H1 (cell line): ENCODE measurements at regions of chr1 and their contacts with region 1.

Region 1: DNA sequence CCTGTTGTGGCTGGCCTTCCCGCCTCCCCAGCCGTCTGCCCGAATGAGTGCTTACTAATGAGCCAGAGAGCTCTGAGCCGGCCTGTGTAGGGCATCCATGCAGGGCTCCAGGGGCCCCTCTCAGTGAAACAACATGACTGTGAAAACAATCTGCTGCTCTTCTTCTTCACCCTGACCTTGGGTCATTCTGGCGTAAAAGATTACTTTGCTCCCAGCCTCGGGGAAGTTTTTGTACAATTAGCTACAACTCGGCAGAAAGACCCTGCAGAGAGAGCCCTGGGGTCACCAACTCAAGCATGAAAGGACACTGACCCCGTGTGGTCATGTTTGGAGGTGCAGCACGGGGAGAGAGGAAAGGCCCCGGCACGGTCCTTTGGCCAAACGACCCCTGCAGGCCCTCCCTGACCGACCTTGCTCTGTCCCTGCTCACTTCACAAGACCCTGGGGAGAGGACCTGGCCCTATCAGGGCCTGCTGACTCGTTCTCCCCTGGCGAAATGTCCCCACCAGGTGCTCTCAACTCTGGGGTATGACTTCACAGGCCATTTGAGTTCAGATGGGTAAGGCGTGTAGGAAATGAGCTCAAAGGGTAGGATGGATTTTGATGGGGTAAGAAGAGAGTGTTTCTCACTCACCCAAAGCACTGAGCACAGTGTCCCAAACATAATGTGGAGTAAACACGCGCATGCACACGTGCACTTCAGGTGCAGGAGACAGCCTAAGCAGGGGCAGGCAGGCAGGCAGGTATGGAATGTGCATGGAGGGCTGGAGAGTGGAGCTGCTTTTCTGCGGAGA is 22.9 kb upstream of the FAM20B start:
- DNase-seq: peak; percentile 82 to 99
- H3K4me3 ChIP-seq: peak overlapping the region in 1 of 4 experiments; percentile 39; a peak in 1 of 8 replicates
- H3K27ac ChIP-seq: no peak overlapping the region
- H3K4me1 ChIP-seq: no peaks in the 10 kb centered on the region
- H3K27me3 ChIP-seq: no peaks in the 10 kb centered on the region
- CTCF ChIP-seq: peak; percentile 83 to 98 (median 97)
- EP300 ChIP-seq: no peak
- POLR2A ChIP-seq: no peak
- RAD21 ChIP-seq: peak; percentile 97 to 98

Region 2: GRCh38 chr1:178575611-178576331 is 427.0 kb before region 1 on chr1:
- CTCF ChIA-PET with region 1: interaction called, 16 read pairs
- POLR2A ChIA-PET with region 1: no interaction called
- DNase-seq: no peak
- H3K4me3 ChIP-seq: peak overlapping the region in 2 of 4 experiments; percentile 0 to 9; a peak in 1 of 8 replicates
- H3K27ac ChIP-seq: peak overlapping the region; percentile 69; the same call in 1 of the 2 replicates
- H3K4me1 ChIP-seq: peaks cover 2 to 12% (median 8%) of the 10 kb centered on the region in 4 experiments
- H3K27me3 ChIP-seq: no peaks in the 10 kb centered on the region
- CTCF ChIP-seq: no peak
- EP300 ChIP-seq: no peak
- POLR2A ChIP-seq: no peak
- RAD21 ChIP-seq: no peak

Region 3: GRCh38 chr1:178768423-178768822 is 234.3 kb before region 1 on chr1:
- CTCF ChIA-PET with region 1: interaction called, 34 read pairs
- POLR2A ChIA-PET with region 1: no interaction called
- DNase-seq: peak in 1 of 2 experiments; percentile 50
- H3K4me3 ChIP-seq: no peak overlapping the region
- H3K27ac ChIP-seq: no peak overlapping the region
- H3K4me1 ChIP-seq: peaks cover 0 to 4% (median 0%) of the 10 kb centered on the region in 4 experiments; a peak in 1 of 7 replicates
- H3K27me3 ChIP-seq: no peaks in the 10 kb centered on the region
- CTCF ChIP-seq: peak; percentile 38 to 89 (median 83)
- EP300 ChIP-seq: no peak
- POLR2A ChIP-seq: no peak
- RAD21 ChIP-seq: peak; percentile 70 to 83

Region 4: GRCh38 chr1:178916448-178917174 is 86.1 kb before region 1 on chr1:
- CTCF ChIA-PET with region 1: interaction called, 11 read pairs
- POLR2A ChIA-PET with region 1: no interaction called
- DNase-seq: no peak
- H3K4me3 ChIP-seq: no peak overlapping the region
- H3K27ac ChIP-seq: no peak overlapping the region
- H3K4me1 ChIP-seq: 0 out of 7 replicates have a peak, but pooled peaks cover 0 to 2% (median 0%) of the 10 kb centered on the region in 4 experiments
- H3K27me3 ChIP-seq: no peaks in the 10 kb centered on the region
- CTCF ChIP-seq: no peak
- EP300 ChIP-seq: no peak
- POLR2A ChIP-seq: no peak
- RAD21 ChIP-seq: no peak

Region 5: GRCh38 chr1:178945763-178946266 is 56.9 kb before region 1 on chr1:
- CTCF ChIA-PET with region 1: interaction called, 12 read pairs
- POLR2A ChIA-PET with region 1: no interaction called
- DNase-seq: peak in 1 of 2 experiments; percentile 63
- H3K4me3 ChIP-seq: peak overlapping the region in 1 of 4 experiments; percentile 16; a peak in 2 of 8 replicates
- H3K27ac ChIP-seq: no peak overlapping the region
- H3K4me1 ChIP-seq: peaks cover 0 to 7% (median 2%) of the 10 kb centered on the region in 4 experiments; a peak in 3 of 7 replicates
- H3K27me3 ChIP-seq: no peaks in the 10 kb centered on the region
- CTCF ChIP-seq: no peak
- EP300 ChIP-seq: no peak
- POLR2A ChIP-seq: no peak
- RAD21 ChIP-seq: no peak

Region 6: DNA sequence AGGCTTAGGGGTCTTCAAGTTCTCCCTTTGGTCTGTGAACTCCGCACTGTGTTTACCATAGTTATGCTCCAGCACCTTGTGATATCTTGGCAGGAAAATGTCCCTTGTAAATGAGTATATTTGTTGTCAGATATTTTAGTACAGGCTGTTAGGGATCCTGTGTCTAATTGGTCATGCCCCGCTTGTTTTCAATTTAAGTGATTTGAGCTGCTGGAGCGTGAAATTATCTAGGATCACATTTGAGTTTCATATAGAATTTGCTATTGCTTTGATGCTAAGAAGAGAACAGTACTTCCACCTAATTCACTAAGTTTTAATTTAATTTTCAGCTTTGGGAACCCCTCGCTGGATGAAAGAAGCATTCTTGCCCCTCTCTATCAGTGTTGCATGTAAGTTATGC is 63.7 kb after region 1 on chr1:
- CTCF ChIA-PET with region 1: interaction called, 10 read pairs
- POLR2A ChIA-PET with region 1: no interaction called
- DNase-seq: no peak
- H3K4me3 ChIP-seq: no peak overlapping the region
- H3K27ac ChIP-seq: no peak overlapping the region
- H3K4me1 ChIP-seq: no peaks in the 10 kb centered on the region
- H3K27me3 ChIP-seq: no peaks in the 10 kb centered on the region
- CTCF ChIP-seq: no peak
- EP300 ChIP-seq: no peak
- POLR2A ChIP-seq: no peak
- RAD21 ChIP-seq: no peak